Psoas muscle (tissue), 8 donors: ENCODE measurements at regions of chr21 and their contacts with region 1.

Region 1: DNA sequence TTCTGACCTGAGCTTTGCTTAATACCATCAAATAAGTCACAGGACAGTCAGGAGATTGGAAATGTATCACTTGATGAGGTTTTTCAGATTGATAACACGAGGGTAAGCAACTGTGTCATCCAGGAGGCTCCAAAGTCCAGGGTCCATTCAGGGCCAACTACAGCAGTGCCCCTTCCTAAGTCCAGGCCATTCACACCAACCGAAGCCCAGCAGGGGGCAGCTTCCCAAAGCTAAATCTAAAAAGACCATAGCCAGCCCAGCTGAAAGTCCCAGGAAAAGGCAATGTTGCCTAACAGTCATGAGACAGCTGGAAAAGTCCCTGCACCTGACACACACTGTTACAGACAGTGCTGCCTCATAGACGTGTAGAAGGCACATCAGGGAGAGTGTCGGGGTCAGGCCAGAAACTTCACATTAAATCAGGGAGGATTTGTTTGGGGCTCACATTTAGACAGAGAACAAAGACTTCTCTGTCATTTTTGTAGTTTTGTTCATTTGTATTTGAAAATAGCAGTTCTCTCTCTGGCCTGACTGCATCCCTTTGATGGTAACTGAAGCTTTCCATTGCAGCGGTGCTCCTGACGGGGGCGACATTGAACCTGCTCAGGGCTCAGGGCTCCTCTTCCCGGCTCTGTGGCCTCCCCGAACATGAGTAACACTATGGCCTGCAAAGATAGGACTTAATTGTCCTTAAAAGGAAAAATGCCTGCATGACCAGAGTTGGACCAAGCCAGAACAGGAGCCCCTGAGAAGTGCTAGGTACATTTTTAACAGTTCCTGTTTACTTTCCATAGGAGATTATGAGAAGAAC is 200.4 kb downstream of the NRIP1 start:
- DNase-seq: peak; percentile 70 to 77
- ATAC-seq: peak; percentile 93 to 96 (median 94)
- H3K4me3 ChIP-seq: no peak overlapping the region
- H3K27ac ChIP-seq: peak overlapping the region; percentile 44
- H3K4me1 ChIP-seq: peaks cover 9% of the 10 kb centered on the region
- H3K27me3 ChIP-seq: no peaks in the 10 kb centered on the region
- CTCF ChIP-seq: peak; percentile 66

Region 2: GRCh38 chr21:14825514-14825974 is 38.9 kb before region 1 on chr21:
- intact Hi-C with region 1: no loop called
- DNase-seq: no peak
- ATAC-seq: no peak
- H3K4me3 ChIP-seq: no peak overlapping the region
- H3K27ac ChIP-seq: no peak overlapping the region
- H3K4me1 ChIP-seq: no peaks in the 10 kb centered on the region
- H3K27me3 ChIP-seq: no peaks in the 10 kb centered on the region
- CTCF ChIP-seq: no peak

Region 3: DNA sequence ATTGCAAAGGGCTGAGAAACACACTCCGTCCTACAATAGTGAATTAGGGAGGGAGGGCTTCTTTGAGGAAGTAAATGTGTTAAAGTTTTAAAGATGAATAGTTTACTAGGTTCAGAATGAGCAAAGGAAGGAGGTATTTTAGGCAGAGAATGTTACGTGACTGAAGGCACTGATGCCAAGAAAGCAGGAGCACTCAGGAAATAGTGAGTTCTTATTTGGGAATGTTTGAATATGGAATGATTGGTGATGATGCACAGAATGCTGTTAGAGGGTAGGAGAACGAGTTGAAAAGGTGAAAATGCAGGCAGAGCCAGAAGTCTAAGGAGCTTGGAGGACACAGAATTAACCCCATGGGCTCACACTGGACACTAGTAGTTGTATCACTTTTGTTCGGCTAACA is 92.4 kb after region 1 on chr21:
- intact Hi-C with region 1: loop called in 1 of 2 experiments (anchors 10 kb)
- DNase-seq: no peak
- ATAC-seq: peak in 1 of 4 donors; percentile 13
- H3K4me3 ChIP-seq: no peak overlapping the region
- H3K27ac ChIP-seq: no peak overlapping the region
- H3K4me1 ChIP-seq: no peaks in the 10 kb centered on the region
- H3K27me3 ChIP-seq: no peaks in the 10 kb centered on the region
- CTCF ChIP-seq: no peak